GM10248 (cell line): ENCODE measurements at regions of chr13 and their contacts with region 1.

Region 1: GRCh38 chr13:48126944-48127830 is 32.3 kb upstream of the MED4 start:
- DNase-seq: peak; percentile 60
- CTCF ChIP-seq: peak; percentile 52

Region 2: GRCh38 chr13:48110931-48111721 is 16.1 kb before region 1 on chr13:
- CTCF ChIA-PET with region 1: interaction called, 11 read pairs
- POLR2A ChIA-PET with region 1: no interaction called
- DNase-seq: no peak
- CTCF ChIP-seq: no peak